ENCODE measurements at regions of chr17 and their contacts with region 1.

Region 1: GRCh38 chr17:40443583-40444327 is 505 bp downstream of the IGFBP4 start:
- DNase-seq: peak; percentile 85 to 87 (median 86)
- ATAC-seq: peak; percentile 86
- H3K4me3 ChIP-seq: peak overlapping the region; percentile 44
- H3K27ac ChIP-seq: peak overlapping the region; percentile 80
- H3K4me1 ChIP-seq: peaks cover 32% of the 10 kb centered on the region in 2 experiments
- H3K27me3 ChIP-seq: no peaks in the 10 kb centered on the region
- CTCF ChIP-seq: peak; percentile 67 to 81 (median 70)
- EP300 ChIP-seq: no peak
- POLR2A ChIP-seq: no peak
- RAD21 ChIP-seq: peak; percentile 42 to 67

Region 2: DNA sequence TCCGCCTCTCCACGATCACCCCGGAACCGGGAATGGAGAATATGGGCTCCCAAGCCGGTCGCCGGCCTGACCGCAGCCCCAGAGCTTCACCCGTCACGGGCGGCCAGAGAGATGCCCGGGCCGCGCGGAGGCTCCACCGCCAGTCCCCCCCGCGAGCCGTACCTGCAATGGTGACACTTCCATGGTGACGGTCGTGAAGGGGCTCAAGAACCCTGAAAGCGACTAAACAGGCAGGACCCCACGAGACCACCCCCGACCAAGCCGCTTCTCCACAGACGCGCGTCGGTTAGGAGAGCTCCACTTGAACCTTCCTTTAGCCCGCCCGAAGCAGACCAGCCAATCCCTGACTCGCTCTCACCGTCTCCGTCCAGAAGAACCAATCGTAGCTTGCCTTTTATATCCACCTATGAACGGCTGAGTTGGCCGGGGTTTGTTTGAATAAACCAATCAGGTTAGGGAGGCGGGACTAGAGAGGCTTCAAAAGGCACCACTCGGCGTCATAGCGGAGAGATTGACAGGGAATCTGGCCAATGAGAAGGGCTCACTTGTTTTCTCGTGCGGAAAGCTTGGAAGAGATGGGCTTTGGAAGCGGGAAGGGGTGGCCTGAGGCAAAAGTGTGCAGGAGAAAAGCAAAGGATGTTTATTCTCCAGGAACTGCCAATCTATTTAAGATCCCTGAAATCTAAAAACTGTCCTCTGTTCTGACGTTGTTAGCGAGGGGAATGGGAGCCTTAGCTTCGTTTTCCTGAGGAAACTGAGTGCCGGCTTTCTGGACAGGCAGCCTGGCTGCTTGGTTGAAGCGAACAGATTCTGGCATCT is 25.9 kb before region 1 on chr17 and contains the start of gene TOP2A:
- CTCF ChIA-PET with region 1: interaction called, 4 read pairs
- POLR2A ChIA-PET with region 1: interaction called, 19 read pairs
- in situ Hi-C with region 1: no loop called
- intact Hi-C with region 1: loop called (anchors 1 kb)
- DNase-seq: peak; percentile 100
- ATAC-seq: peak; percentile 94
- H3K4me3 ChIP-seq: peak within 1 kb of the TSS; percentile 74
- H3K27ac ChIP-seq: peak within 1 kb of the TSS; percentile 92
- H3K4me1 ChIP-seq: peaks cover 7 to 15% of the 10 kb centered on the region in 2 experiments
- H3K27me3 ChIP-seq: no peaks in the 10 kb centered on the region
- CTCF ChIP-seq: no peak
- EP300 ChIP-seq: 0 out of 2 replicates have a peak, but pooled peaks have one; percentile 23
- POLR2A ChIP-seq: peak; percentile 95
- RAD21 ChIP-seq: no peak
- polyA plus RNA-seq, gene TOP2A: 175 to 259 TPM

Region 3: GRCh38 chr17:40453881-40454612 is 10.3 kb after region 1 on chr17:
- CTCF ChIA-PET with region 1: no interaction called
- POLR2A ChIA-PET with region 1: interaction called, 22 read pairs
- in situ Hi-C with region 1: no loop called
- intact Hi-C with region 1: no loop called
- DNase-seq: no peak
- ATAC-seq: no peak
- H3K4me3 ChIP-seq: no peak overlapping the region
- H3K27ac ChIP-seq: no peak overlapping the region
- H3K4me1 ChIP-seq: peaks cover 0 to 10% of the 10 kb centered on the region in 2 experiments; a peak in 3 of 5 replicates
- H3K27me3 ChIP-seq: no peaks in the 10 kb centered on the region
- CTCF ChIP-seq: no peak
- EP300 ChIP-seq: no peak
- POLR2A ChIP-seq: no peak
- RAD21 ChIP-seq: no peak

Region 4: GRCh38 chr17:40479533-40480480 is 36.1 kb after region 1 on chr17:
- CTCF ChIA-PET with region 1: interaction called, 5 read pairs
- POLR2A ChIA-PET with region 1: interaction called, 5 read pairs
- in situ Hi-C with region 1: no loop called
- intact Hi-C with region 1: loop called (anchors 5 kb)
- DNase-seq: no peak
- ATAC-seq: no peak
- H3K4me3 ChIP-seq: no peak overlapping the region
- H3K27ac ChIP-seq: no peak overlapping the region
- H3K4me1 ChIP-seq: peaks cover 19 to 41% of the 10 kb centered on the region in 2 experiments; a peak in 4 of 5 replicates
- H3K27me3 ChIP-seq: no peaks in the 10 kb centered on the region
- CTCF ChIP-seq: no peak
- EP300 ChIP-seq: no peak
- POLR2A ChIP-seq: no peak
- RAD21 ChIP-seq: no peak

Region 5: GRCh38 chr17:40559954-40560591 is 116.3 kb after region 1 on chr17:
- CTCF ChIA-PET with region 1: interaction called, 26 read pairs
- POLR2A ChIA-PET with region 1: interaction called, 3 read pairs
- in situ Hi-C with region 1: no loop called
- intact Hi-C with region 1: loop called (anchors 1 kb)
- DNase-seq: peak; percentile 91 to 94 (median 92)
- ATAC-seq: peak; percentile 89
- H3K4me3 ChIP-seq: peak overlapping the region; percentile 26
- H3K27ac ChIP-seq: peak overlapping the region; percentile 30; the same call in 2 of the 3 replicates
- H3K4me1 ChIP-seq: peaks cover 29 to 36% of the 10 kb centered on the region in 2 experiments
- H3K27me3 ChIP-seq: peaks cover 5 to 16% of the 10 kb centered on the region in 2 experiments; a peak in 2 of 5 replicates
- CTCF ChIP-seq: peak; percentile 95 to 99 (median 98)
- EP300 ChIP-seq: peak; percentile 33; the same call in 1 of the 2 replicates
- POLR2A ChIP-seq: no peak
- RAD21 ChIP-seq: peak; percentile 88 to 97

Measured in K562 (cell line).